Activated CD4-positive, alpha-beta T cell treated with anti-CD3 and anti-CD28 coated beads for 36 hours (primary cell): ENCODE measurements at regions of chr1 and their contacts with region 1.

Region 1: DNA sequence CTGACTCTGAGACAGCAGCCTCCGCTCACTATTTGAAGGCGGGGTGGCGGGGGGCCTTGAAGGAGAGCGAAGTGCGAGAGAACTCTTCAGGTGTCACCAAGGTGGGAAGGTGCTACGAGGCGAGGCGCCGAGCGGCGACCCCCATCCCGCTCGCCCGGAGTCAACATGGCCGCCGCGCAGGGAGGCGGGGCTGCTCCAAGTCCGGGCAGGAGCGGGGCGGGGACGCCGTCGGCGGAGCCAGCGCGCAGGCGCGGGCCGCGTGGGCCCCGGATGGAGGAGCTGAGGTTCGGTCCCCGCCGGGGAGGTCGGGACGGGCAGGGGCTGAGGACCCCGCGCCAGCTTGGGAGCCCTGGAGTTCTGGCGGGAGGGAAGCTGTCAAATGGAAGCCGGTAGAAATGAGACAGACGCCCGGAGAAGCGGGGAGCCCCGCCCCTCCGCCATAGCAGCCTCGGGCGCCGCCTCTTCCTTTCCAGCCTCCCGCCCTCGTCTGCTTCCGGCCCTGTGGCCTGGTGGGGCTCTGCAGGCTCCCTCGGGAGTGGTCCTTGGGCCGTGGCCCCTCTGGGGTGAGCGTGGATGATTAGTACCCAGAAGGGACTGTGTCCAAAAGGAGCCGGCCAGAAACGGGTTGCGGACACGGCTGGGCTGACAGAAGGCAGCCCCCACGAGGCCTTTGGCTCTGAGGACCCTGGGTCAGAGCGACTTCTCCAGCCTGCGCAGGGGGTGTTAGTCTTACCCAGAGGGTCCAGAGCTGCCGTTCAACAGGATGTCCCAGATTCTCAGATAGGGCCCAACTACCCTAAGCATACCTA is at the start of gene PIGV:
- DNase-seq: peak; percentile 93
- ATAC-seq: peak; percentile 48
- H3K4me3 Mint-ChIP-seq: peak within 1 kb of the TSS; percentile 82
- H3K27ac Mint-ChIP-seq: peak within 1 kb of the TSS; percentile 99
- H3K4me1 Mint-ChIP-seq: peaks cover 55% of the 10 kb centered on the region
- H3K27me3 Mint-ChIP-seq: no peaks in the 10 kb centered on the region
- total RNA-seq, gene PIGV: 12.0 to 17.2 TPM

Region 2: GRCh38 chr1:25819576-25820246 is 968.2 kb before region 1 on chr1 and contains the start of gene MTFR1L:
- CTCF ChIA-PET with region 1: no interaction called
- POLR2A ChIA-PET with region 1: no interaction called
- intact Hi-C with region 1: no loop called
- DNase-seq: peak; percentile 97
- ATAC-seq: peak; percentile 92
- H3K4me3 Mint-ChIP-seq: peak within 1 kb of the TSS; percentile 87
- H3K27ac Mint-ChIP-seq: peak within 1 kb of the TSS; percentile 93
- H3K4me1 Mint-ChIP-seq: peaks cover 33% of the 10 kb centered on the region
- H3K27me3 Mint-ChIP-seq: no peaks in the 10 kb centered on the region
- total RNA-seq, gene MTFR1L: 27.7 to 30.8 TPM

Region 3: DNA sequence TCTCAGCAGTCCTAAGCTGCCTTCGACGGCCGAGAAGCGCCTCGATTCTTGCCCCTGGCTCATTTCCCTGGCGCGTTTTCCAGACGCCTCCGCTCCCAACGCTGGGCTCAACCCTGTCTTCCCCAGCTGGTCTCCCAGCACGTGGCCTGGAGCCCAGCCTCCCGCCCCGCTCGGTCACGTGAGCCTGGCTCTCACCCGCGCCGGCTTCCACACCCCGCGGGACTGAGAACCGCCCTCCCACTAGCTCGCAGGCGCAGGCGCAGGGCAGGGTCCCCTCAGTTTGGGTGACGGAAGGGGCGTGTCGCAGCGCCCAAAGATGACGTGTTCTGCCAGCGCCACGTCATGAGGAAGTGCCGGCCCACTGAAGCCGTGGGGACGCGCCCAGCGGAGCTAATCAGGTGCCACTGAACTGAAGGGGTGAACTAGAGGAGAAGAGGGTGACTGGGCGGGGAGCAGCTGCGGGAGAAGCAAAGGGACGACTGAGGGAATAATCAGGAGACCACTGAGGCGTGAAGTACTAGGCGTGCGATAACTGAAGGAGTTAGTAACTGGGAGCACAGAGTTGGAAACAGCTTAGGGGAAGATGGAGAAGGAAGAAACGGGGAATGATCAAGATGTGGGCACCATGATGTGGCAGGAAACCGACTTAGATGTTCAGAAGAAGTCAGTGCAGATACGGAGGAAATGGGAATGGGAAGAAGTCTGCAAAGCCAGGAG is 355.8 kb before region 1 on chr1 and contains the start of gene DHDDS:
- CTCF ChIA-PET with region 1: interaction called, 3 read pairs
- POLR2A ChIA-PET with region 1: no interaction called
- intact Hi-C with region 1: loop called in 1 of 2 experiments (anchors 2 kb)
- DNase-seq: peak; percentile 99
- ATAC-seq: peak; percentile 98
- H3K4me3 Mint-ChIP-seq: peak within 1 kb of the TSS; percentile 92
- H3K27ac Mint-ChIP-seq: peak within 1 kb of the TSS; percentile 92
- H3K4me1 Mint-ChIP-seq: peaks cover 17% of the 10 kb centered on the region
- H3K27me3 Mint-ChIP-seq: no peaks in the 10 kb centered on the region
- total RNA-seq, gene DHDDS: 34.1 to 40.7 TPM

Region 4: GRCh38 chr1:26582836-26583460 is 205.0 kb before region 1 on chr1:
- CTCF ChIA-PET with region 1: interaction called, 29 read pairs
- POLR2A ChIA-PET with region 1: interaction called, 13 read pairs
- intact Hi-C with region 1: loop called (anchors 1 kb)
- DNase-seq: peak; percentile 93
- ATAC-seq: peak; percentile 55
- H3K4me3 Mint-ChIP-seq: peak overlapping the region; percentile 35
- H3K27ac Mint-ChIP-seq: peak overlapping the region; percentile 95
- H3K4me1 Mint-ChIP-seq: peaks cover 54% of the 10 kb centered on the region
- H3K27me3 Mint-ChIP-seq: no peaks in the 10 kb centered on the region

Region 5: GRCh38 chr1:26695356-26696118 is 92.4 kb before region 1 on chr1 and contains the start of gene ARID1A:
- CTCF ChIA-PET with region 1: interaction called, 64 read pairs
- POLR2A ChIA-PET with region 1: interaction called, 83 read pairs
- intact Hi-C with region 1: loop called (anchors 1 kb)
- DNase-seq: peak; percentile 97
- ATAC-seq: peak; percentile 55
- H3K4me3 Mint-ChIP-seq: peak within 1 kb of the TSS; percentile 81
- H3K27ac Mint-ChIP-seq: peak within 1 kb of the TSS; percentile 91
- H3K4me1 Mint-ChIP-seq: peaks cover 30% of the 10 kb centered on the region
- H3K27me3 Mint-ChIP-seq: no peaks in the 10 kb centered on the region
- total RNA-seq, gene ARID1A: 73.1 to 112 TPM

Region 6: GRCh38 chr1:26744075-26744959 is 43.6 kb before region 1 on chr1:
- CTCF ChIA-PET with region 1: interaction called, 45 read pairs
- POLR2A ChIA-PET with region 1: interaction called, 12 read pairs
- intact Hi-C with region 1: loop called (anchors 1 kb)
- DNase-seq: peak; percentile 90
- ATAC-seq: peak; percentile 93
- H3K4me3 Mint-ChIP-seq: peak overlapping the region; percentile 67
- H3K27ac Mint-ChIP-seq: peak overlapping the region; percentile 97
- H3K4me1 Mint-ChIP-seq: peaks cover 93% of the 10 kb centered on the region
- H3K27me3 Mint-ChIP-seq: no peaks in the 10 kb centered on the region

Region 7: GRCh38 chr1:26826261-26827105 is 38.6 kb after region 1 on chr1 and contains the start of gene ZDHHC18:
- CTCF ChIA-PET with region 1: interaction called, 3 read pairs
- POLR2A ChIA-PET with region 1: no interaction called
- intact Hi-C with region 1: loop called in 1 of 2 experiments (anchors 1 kb)
- DNase-seq: peak; percentile 84
- ATAC-seq: peak; percentile 81
- H3K4me3 Mint-ChIP-seq: peak within 1 kb of the TSS; percentile 94
- H3K27ac Mint-ChIP-seq: peak within 1 kb of the TSS; percentile 93
- H3K4me1 Mint-ChIP-seq: peaks cover 52% of the 10 kb centered on the region
- H3K27me3 Mint-ChIP-seq: no peaks in the 10 kb centered on the region
- total RNA-seq, gene ZDHHC18: 51.6 to 66.0 TPM

Region 8: GRCh38 chr1:26921540-26922430 is 133.9 kb after region 1 on chr1 and contains the start of gene NUDC:
- CTCF ChIA-PET with region 1: no interaction called
- POLR2A ChIA-PET with region 1: no interaction called
- intact Hi-C with region 1: loop called in 1 of 2 experiments (anchors 1 kb)
- DNase-seq: peak; percentile 98
- ATAC-seq: peak; percentile 98
- H3K4me3 Mint-ChIP-seq: peak within 1 kb of the TSS; percentile 82
- H3K27ac Mint-ChIP-seq: peak within 1 kb of the TSS; percentile 90
- H3K4me1 Mint-ChIP-seq: peaks cover 38% of the 10 kb centered on the region
- H3K27me3 Mint-ChIP-seq: no peaks in the 10 kb centered on the region
- total RNA-seq, gene NUDC: 95.9 to 101 TPM